Mammary epithelial cell (primary cell): ENCODE measurements at regions of chr18 and their contacts with region 1.

Region 1: DNA sequence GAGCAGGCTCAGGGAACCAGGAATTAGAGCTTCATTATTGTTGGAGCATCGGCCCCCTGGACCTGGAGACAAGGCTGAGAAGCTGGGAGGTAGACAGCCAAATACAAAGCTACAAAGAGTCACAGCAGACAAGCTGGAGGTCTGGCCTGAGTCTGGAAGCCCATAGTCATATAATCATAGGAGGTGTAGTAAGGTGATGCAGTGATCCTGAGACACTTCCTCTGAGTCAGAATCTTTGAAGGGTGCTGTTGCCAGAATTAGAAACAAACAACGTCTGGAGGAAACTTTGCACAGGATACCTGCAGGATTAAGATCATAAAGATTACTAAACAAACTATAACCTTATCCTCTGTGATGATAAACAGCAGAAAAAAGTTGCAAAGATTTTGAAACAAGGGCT is 213.8 kb downstream of the DSC3 start:
- DNase-seq: peak; percentile 32
- H3K4me3 ChIP-seq: no peak overlapping the region
- H3K27ac ChIP-seq: no peak overlapping the region
- H3K4me1 ChIP-seq: no peaks in the 10 kb centered on the region
- H3K27me3 ChIP-seq: peaks cover 2% of the 10 kb centered on the region
- CTCF ChIP-seq: no peak

Region 2: GRCh38 chr18:30342675-30343074 is 486.0 kb before region 1 on chr18:
- CTCF ChIA-PET with region 1: no interaction called
- dilution Hi-C with region 1: no loop called
- in situ Hi-C with region 1: no loop called
- intact Hi-C with region 1: no loop called
- DNase-seq: no peak
- H3K4me3 ChIP-seq: no peak overlapping the region
- H3K27ac ChIP-seq: no peak overlapping the region
- H3K4me1 ChIP-seq: no peaks in the 10 kb centered on the region
- H3K27me3 ChIP-seq: peaks cover 2% of the 10 kb centered on the region
- CTCF ChIP-seq: no peak

Region 3: GRCh38 chr18:30748541-30748940 is 80.2 kb before region 1 on chr18:
- CTCF ChIA-PET with region 1: no interaction called
- dilution Hi-C with region 1: no loop called
- in situ Hi-C with region 1: no loop called
- intact Hi-C with region 1: loop called (anchors 10 kb)
- DNase-seq: no peak
- H3K4me3 ChIP-seq: no peak overlapping the region
- H3K27ac ChIP-seq: no peak overlapping the region
- H3K4me1 ChIP-seq: no peaks in the 10 kb centered on the region
- H3K27me3 ChIP-seq: no peaks in the 10 kb centered on the region
- CTCF ChIP-seq: no peak

Region 4: DNA sequence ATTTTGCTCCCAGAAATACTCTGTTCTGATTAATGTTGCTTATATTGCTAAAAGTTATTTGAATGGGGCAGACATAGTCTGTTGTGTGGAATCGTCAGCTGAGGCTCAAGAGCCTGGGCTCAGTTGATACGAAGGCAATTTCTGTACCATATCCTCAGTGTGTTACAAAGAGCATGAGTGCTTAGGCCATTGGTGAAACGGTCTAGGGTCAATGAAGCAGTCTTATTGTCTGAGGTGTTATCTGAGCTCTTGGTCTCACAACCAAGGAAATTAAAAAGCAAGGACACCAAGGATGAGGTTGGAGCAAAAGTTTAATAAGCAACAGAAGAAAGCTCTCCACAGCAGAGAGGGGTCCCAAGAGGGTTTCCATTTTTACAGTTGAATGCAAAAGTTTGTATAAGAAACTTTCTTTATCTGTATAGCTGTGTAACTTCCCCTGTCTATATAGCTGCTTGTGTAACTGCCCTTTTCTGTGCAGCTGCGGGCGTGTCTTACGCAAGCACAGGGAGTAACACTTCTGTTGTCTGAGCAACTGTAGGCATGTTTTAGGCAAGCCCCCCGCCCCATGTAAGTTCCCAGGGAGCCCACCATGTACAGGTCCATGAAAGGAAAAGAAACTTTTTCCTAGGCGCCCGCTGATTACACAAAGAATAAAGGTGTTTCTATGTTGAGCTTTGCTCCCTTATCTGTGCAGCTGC is 374.5 kb after region 1 on chr18:
- CTCF ChIA-PET with region 1: no interaction called
- dilution Hi-C with region 1: no loop called
- in situ Hi-C with region 1: no loop called
- intact Hi-C with region 1: no loop called
- DNase-seq: no peak
- H3K4me3 ChIP-seq: no peak overlapping the region
- H3K27ac ChIP-seq: no peak overlapping the region
- H3K4me1 ChIP-seq: peaks cover 32% of the 10 kb centered on the region
- H3K27me3 ChIP-seq: no peaks in the 10 kb centered on the region
- CTCF ChIP-seq: no peak